PC-9 (cell line): ENCODE measurements at regions of chr9 and their contacts with region 1.

Region 1: GRCh38 chr9:106420511-106420944 is 442.4 kb upstream of the ZNF462 start:
- DNase-seq: peak; percentile 78 to 84
- H3K4me3 ChIP-seq: peak overlapping the region; percentile 13; the same call in 1 of the 2 replicates
- H3K27ac ChIP-seq: peak overlapping the region; percentile 80
- H3K4me1 ChIP-seq: peaks cover 32% of the 10 kb centered on the region
- H3K27me3 ChIP-seq: no peaks in the 10 kb centered on the region
- CTCF ChIP-seq: no peak

Region 2: DNA sequence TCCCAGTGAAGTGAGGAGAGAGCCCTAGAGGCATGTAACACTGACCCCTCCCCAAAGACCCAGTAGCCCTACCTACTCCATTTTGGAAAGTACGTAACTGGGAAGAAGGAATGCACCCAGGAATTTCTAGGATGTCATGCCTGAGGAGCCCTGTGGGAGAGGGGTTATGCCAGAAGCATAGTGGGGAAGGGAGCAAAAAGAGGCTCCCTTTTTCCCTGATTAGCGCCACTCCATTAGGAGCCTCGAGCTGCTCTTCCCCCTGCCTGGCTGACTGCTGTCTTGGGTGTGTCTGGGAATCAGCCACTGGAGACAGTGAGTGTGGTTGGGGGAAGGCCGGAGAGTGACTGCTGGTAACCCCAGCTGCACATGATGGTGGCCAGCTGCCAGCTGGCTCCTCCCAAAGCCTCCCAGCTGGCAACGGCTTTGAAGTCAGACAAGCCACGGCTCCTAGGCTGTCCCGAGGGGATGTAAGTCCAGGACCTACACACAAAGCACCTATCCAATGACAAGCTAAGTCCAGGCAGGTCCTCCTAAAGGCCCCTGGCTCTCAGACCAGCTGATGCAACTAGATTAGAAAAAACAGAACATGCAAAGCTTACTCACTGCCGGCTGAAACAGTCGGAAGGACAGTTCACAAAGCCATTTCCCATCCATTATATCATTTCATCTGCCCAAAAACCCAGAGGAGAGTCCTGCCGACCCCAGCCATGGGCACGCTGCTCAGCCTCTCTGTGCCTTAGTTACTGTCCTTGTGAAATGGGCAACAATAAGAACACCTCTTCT is 1356.0 kb before region 1 on chr9:
- CTCF ChIA-PET with region 1: no interaction called
- POLR2A ChIA-PET with region 1: no interaction called
- intact Hi-C with region 1: loop called (anchors 10 kb)
- DNase-seq: peak; percentile 93 to 94
- H3K4me3 ChIP-seq: peak overlapping the region; percentile 36; the same call in 1 of the 2 replicates
- H3K27ac ChIP-seq: peak overlapping the region; percentile 97
- H3K4me1 ChIP-seq: peaks cover 43% of the 10 kb centered on the region
- H3K27me3 ChIP-seq: no peaks in the 10 kb centered on the region
- CTCF ChIP-seq: no peak

Region 3: GRCh38 chr9:105901514-105902109 is 518.9 kb before region 1 on chr9:
- CTCF ChIA-PET with region 1: no interaction called
- POLR2A ChIA-PET with region 1: no interaction called
- intact Hi-C with region 1: loop called (anchors 5 kb)
- DNase-seq: peak; percentile 57 to 73
- H3K4me3 ChIP-seq: no peak overlapping the region
- H3K27ac ChIP-seq: no peak overlapping the region
- H3K4me1 ChIP-seq: peaks cover 12% of the 10 kb centered on the region
- H3K27me3 ChIP-seq: no peaks in the 10 kb centered on the region
- CTCF ChIP-seq: peak; percentile 90

Region 4: DNA sequence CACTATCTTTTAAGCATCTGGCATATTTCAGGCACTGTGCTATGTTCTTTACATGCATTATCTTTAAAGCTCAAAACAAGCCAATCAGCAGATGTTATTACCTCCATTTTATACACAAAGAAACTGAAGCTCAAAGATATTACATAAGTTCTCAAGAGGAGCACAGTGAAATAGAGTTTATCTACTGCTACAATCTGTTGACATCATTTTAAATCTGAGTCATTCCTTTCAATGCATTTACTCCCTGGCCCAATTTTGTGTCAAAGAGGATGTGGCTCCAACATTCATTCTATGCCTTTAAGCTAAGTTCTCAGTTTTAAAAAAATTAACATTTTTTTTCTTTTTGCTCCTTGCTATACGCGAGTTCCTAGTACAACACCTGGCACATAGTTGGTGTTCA is 43.9 kb before region 1 on chr9:
- CTCF ChIA-PET with region 1: no interaction called
- POLR2A ChIA-PET with region 1: interaction called, 3 read pairs
- intact Hi-C with region 1: loop called (anchors 10 kb)
- DNase-seq: peak in 1 of 2 experiments; percentile 41
- H3K4me3 ChIP-seq: no peak overlapping the region
- H3K27ac ChIP-seq: no peak overlapping the region
- H3K4me1 ChIP-seq: peaks cover 10% of the 10 kb centered on the region; the same call in 1 of the 2 replicates
- H3K27me3 ChIP-seq: no peaks in the 10 kb centered on the region
- CTCF ChIP-seq: no peak

Region 5: DNA sequence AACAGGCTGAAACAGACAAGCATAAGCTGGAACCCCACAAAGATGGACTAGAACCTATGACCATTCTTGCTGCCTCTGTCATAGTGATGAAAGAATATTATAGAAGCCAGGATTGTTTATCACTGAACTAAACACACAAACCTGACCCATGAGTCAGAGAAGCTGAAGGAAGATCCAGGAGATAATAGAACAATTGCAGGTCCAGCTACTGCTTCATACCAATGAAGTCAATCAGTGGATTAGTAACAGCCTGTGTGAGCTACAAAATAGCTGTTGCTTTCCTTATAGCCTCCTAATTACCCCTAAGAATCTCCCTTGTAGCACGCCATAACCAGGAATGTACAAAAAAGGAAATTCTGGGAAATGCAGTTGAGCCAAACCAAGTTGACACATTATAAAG is 17.4 kb before region 1 on chr9:
- CTCF ChIA-PET with region 1: no interaction called
- POLR2A ChIA-PET with region 1: no interaction called
- intact Hi-C with region 1: loop called (anchors 1 kb)
- DNase-seq: peak; percentile 19 to 81
- H3K4me3 ChIP-seq: no peak overlapping the region
- H3K27ac ChIP-seq: peak overlapping the region; percentile 27; the same call in 1 of the 2 replicates
- H3K4me1 ChIP-seq: peaks cover 20% of the 10 kb centered on the region
- H3K27me3 ChIP-seq: no peaks in the 10 kb centered on the region
- CTCF ChIP-seq: no peak

Region 6: GRCh38 chr9:106503759-106504158 is 83.2 kb after region 1 on chr9:
- CTCF ChIA-PET with region 1: no interaction called
- POLR2A ChIA-PET with region 1: no interaction called
- intact Hi-C with region 1: no loop called
- DNase-seq: no peak
- H3K4me3 ChIP-seq: no peak overlapping the region
- H3K27ac ChIP-seq: no peak overlapping the region
- H3K4me1 ChIP-seq: no peaks in the 10 kb centered on the region
- H3K27me3 ChIP-seq: no peaks in the 10 kb centered on the region
- CTCF ChIP-seq: no peak